Common myeloid progenitor, CD34-positive (primary cell): ENCODE measurements at regions of chr2 and their contacts with region 1.

Region 1: GRCh38 chr2:170324640-170325046 is 146.7 kb downstream of the MYO3B start:
- DNase-seq: peak; percentile 66 to 82 (median 79)
- H3K4me3 ChIP-seq: no peak overlapping the region
- H3K27ac ChIP-seq: no peak overlapping the region
- H3K4me1 ChIP-seq: no peaks in the 10 kb centered on the region
- H3K27me3 ChIP-seq: no peaks in the 10 kb centered on the region

Region 2: GRCh38 chr2:170227507-170227947 is 97.1 kb before region 1 on chr2:
- CTCF ChIA-PET with region 1: no interaction called
- POLR2A ChIA-PET with region 1: no interaction called
- DNase-seq: no peak
- H3K4me3 ChIP-seq: no peak overlapping the region
- H3K27ac ChIP-seq: no peak overlapping the region
- H3K4me1 ChIP-seq: no peaks in the 10 kb centered on the region
- H3K27me3 ChIP-seq: no peaks in the 10 kb centered on the region

Region 3: DNA sequence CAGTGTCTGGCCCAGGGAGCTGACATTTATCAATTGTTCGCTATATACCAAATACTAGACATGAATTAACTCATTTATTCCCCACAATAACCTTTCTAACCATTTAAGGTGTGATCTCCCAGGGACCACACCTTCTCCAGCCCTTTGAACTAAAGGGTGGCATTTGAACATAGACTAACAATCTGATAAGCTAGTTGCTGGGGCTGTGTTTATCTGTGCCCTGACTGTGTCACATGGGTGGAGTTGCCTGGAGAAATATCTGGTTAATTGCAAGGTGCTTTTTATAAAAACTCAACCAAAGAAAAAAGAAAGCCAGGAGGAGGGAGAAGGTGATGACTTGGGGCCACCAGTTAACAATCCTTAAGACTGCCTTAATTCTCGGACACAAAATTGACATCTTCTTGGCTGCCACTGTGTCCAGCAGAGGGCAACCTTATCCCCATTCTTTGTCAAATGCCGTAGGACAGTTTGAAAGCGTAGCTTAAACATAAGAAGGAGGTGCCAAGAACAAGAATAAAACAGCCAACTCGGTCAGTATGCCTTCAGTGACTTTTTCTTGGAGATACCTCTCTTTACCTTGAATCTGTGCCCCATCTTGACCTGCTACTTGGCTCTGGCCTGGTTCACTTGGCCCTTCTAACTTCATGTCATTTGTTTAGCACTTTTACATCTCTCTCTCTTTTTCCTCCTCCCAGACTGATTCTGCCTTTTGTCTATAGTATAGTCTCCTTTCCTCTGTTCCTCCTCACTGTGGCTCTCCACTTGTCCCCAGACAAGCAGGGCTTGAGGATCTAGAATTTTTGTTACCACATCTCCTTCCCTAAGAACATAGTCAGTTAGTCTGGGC is 36.7 kb after region 1 on chr2:
- CTCF ChIA-PET with region 1: interaction called, 26 read pairs
- POLR2A ChIA-PET with region 1: interaction called, 3 read pairs
- DNase-seq: peak; percentile 74 to 85 (median 83)
- H3K4me3 ChIP-seq: no peak overlapping the region
- H3K27ac ChIP-seq: no peak overlapping the region
- H3K4me1 ChIP-seq: peaks cover 14 to 28% (median 15%) of the 10 kb centered on the region in 4 experiments
- H3K27me3 ChIP-seq: no peaks in the 10 kb centered on the region

Region 4: GRCh38 chr2:170369894-170370293 is 45.3 kb after region 1 on chr2:
- CTCF ChIA-PET with region 1: interaction called, 26 read pairs
- POLR2A ChIA-PET with region 1: no interaction called
- DNase-seq: peak; percentile 41 to 57 (median 46)
- H3K4me3 ChIP-seq: no peak overlapping the region
- H3K27ac ChIP-seq: no peak overlapping the region
- H3K4me1 ChIP-seq: peaks cover 3 to 20% (median 7%) of the 10 kb centered on the region in 4 experiments
- H3K27me3 ChIP-seq: peaks cover 0 to 12% (median 4%) of the 10 kb centered on the region in 5 experiments

Region 5: DNA sequence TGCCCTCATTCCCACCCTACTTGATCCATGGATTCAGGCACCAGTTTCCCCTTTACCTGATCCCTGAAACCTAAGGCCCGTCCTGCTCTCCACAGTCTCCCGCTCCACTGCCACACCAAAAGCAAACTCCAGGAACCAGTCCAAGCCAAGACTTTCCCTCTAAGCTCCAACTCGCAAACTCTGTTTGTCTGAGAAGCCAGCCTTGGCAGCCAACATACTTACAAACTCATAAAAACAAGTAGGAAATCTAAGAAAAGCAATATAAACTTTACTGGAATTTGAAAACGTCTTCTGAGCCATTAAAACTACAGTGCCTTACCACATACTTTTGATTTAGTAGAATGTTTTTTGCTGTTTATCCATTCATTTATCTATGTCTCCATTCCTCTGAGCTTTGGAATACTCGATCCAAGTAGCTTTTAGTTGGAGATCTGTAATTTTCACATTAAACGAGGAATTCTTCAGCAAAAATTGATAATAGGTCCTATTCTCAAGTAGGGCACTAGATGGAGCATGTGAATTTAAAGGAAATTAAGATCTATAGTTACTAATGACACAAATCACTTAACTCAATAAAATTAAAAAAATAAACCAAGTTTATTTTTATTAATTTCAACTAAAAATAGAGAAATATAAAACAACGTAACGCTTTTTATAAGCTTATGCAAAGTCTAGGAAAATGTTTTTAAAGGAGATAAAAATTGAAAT is 53.0 kb after region 1 on chr2:
- CTCF ChIA-PET with region 1: interaction called, 11 read pairs
- POLR2A ChIA-PET with region 1: no interaction called
- DNase-seq: no peak
- H3K4me3 ChIP-seq: no peak overlapping the region
- H3K27ac ChIP-seq: no peak overlapping the region
- H3K4me1 ChIP-seq: no peaks in the 10 kb centered on the region
- H3K27me3 ChIP-seq: no peaks in the 10 kb centered on the region

Region 6: GRCh38 chr2:170461884-170462283 is 137.2 kb after region 1 on chr2:
- CTCF ChIA-PET with region 1: no interaction called
- POLR2A ChIA-PET with region 1: no interaction called
- DNase-seq: no peak
- H3K4me3 ChIP-seq: no peak overlapping the region
- H3K27ac ChIP-seq: no peak overlapping the region
- H3K4me1 ChIP-seq: no peaks in the 10 kb centered on the region
- H3K27me3 ChIP-seq: no peaks in the 10 kb centered on the region

Region 7: DNA sequence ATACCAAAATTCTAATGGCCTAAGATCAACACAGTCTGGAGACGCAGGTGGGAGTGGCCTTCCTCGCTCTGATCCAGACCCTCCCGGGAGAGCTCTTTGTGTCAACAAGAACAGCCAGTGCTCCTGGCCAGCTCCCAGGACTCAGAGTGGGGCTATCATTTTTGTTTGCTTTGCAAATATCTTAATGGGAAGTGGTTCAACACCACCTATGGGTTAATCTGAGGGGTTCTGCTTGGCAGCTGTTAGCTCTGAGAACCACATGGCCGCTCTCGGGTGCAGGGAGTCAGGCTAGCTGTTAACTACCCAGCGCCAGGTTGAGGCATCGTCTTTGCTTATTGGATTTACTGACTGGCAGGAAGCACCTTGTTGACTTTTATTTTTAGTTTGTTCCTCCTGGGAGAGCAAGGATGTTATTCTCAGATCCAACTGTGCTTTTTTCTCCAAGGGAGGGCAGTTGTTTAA is 205.7 kb after region 1 on chr2:
- CTCF ChIA-PET with region 1: no interaction called
- POLR2A ChIA-PET with region 1: no interaction called
- DNase-seq: peak; percentile 21 to 71 (median 64)
- H3K4me3 ChIP-seq: peak overlapping the region in 2 of 7 experiments; percentile 6 to 46
- H3K27ac ChIP-seq: no peak overlapping the region
- H3K4me1 ChIP-seq: peaks cover 0 to 9% (median 2%) of the 10 kb centered on the region in 4 experiments
- H3K27me3 ChIP-seq: peaks cover 0 to 3% (median 0%) of the 10 kb centered on the region in 5 experiments